OCI-LY7 (cell line): ENCODE measurements at regions of chr21 and their contacts with region 1.

Region 1: DNA sequence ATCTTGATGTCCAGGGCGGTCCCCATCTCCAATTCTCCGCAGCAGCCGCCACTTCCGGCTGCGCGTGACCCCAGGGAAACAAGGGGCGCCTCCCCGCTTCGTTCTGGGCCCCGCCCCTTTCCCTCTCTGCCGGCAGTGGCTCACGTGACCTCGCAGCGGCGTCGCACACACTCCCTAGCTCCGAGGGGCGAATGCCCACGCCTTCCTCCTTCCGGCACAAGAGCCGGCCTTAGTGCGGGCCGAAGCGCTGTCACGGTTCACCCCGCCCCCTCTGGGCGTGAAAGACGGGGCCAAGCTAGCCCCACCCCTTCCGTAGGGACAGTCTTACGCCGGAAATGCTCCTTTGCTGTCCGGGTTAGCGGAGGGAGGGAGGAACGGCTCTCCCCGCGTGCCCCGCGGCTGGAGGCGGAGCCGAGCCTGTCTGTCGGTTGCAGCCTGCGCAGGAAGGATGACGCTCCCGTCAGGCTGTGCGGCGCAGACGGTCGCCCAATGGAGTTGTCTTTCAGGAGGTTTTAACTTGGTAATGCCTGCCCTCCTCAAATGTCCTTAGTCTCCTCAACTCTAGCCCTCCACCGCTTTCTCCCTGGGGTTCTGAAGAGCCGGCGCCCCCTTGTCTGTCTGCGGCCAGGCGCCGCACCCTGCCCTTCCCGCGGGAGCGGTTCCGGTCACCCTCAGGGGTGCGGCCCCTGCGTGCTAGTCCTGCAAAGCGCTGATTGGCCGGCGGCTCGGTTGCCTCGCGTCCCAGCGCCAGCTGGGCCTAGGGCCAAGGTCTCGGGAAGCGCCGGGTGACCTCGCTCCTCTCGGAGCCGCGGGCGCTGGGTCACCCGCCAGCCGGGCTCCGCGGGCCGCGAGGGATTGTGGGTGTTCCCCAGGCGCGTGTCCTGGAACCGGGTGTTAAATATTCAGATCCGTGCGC is at the start of gene VPS26C:
- DNase-seq: peak; percentile 99
- H3K4me3 ChIP-seq: peak within 1 kb of the TSS; percentile 79
- H3K27ac ChIP-seq: peak within 1 kb of the TSS; percentile 90
- H3K4me1 ChIP-seq: peaks cover 26% of the 10 kb centered on the region
- CTCF ChIP-seq: no peak
- total RNA-seq, gene VPS26C: 33.0 and 39.7 TPM in 2 replicates

Region 2: DNA sequence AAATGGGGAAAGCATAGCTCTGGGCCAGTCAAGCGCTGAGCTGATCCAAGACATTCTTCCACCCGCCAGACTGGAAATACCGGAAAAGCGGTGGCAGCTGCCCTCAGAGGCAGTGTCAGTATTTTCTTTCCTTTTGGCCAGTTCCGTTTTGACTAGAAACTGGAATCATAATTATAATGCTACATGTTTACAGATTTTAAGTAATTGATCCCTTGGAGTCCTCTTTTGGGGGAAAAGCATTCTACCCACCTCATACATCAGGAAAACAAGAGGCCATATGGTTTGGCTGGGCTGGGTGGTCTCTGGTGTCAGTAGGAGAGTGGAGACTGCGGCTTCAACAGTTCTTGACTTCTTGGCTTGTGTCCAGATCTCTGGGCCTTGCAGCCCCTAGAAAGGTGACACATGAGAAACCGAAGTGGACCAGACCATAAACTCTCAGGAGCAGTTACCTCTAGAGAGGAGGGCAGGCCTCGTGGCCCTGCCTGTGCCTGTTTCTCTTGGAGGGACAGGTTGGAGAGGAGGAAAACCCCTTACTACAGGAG is 757.3 kb before region 1 on chr21:
- CTCF ChIA-PET with region 1: no interaction called
- POLR2A ChIA-PET with region 1: no interaction called
- intact Hi-C with region 1: loop called (anchors 10 kb)
- DNase-seq: no peak
- H3K4me3 ChIP-seq: no peak overlapping the region
- H3K27ac ChIP-seq: no peak overlapping the region
- H3K4me1 ChIP-seq: peaks cover 78% of the 10 kb centered on the region
- CTCF ChIP-seq: no peak

Region 3: DNA sequence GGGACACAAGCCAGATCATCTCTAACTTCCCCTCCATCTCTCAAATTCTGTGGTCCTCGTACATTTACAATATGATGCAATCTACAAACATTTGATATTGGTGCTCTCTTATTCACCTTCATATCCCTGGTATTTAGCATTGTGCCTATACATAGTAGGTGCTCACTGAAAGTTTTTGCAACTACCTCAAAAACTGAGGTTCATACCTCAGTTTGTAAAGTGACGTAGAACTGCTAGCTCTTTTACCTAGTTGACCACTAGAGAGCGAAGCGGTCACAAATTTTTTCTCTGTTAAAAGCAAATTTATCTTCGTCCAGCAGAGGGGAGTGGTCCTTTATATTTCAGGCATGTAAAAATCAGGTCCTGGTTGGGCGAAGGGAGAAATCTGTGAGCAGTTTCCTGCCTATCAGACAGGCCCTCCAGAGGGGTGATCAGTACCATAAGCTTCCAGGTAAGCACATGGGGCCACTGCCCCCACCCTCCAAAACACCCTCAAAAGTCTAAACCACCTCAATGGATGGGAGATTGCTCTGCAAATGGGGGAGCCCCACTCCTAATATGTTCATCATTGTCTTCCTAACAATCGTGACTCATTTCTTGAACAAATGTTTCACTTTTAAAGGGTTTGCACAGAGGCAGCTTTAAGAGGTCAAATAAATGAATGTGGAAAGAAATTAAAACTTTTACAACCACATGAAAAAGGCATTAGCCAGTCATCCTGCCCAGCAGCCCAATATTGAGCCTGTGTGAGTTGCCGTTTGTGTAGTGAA is 290.5 kb before region 1 on chr21:
- CTCF ChIA-PET with region 1: no interaction called
- POLR2A ChIA-PET with region 1: no interaction called
- intact Hi-C with region 1: loop called (anchors 5 kb)
- DNase-seq: peak; percentile 87
- H3K4me3 ChIP-seq: peak overlapping the region; percentile 10
- H3K27ac ChIP-seq: no peak overlapping the region
- H3K4me1 ChIP-seq: peaks cover 8% of the 10 kb centered on the region
- CTCF ChIP-seq: peak; percentile 97

Region 4: DNA sequence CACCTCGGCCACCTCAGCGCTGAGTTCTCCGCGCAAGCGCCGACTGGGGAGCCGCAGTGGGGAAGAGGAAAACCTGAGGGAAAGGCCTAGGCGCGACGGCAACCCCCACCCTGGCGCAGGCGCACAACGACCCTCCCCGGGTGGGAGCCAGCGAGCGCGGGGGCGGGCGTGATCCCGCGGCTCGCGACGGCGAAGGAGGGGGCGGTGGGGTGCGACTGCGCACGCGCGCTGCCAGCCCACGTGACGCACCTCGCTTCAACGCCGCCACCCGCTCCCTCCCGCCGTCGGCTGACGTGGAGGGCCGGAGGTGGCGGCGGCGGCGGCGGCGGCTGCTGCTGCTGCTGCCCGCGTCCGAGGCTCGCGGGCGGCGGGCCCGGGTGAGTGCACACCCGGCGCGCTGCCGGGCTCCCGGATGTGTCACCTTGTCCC is 194.5 kb before region 1 on chr21 and contains the starts of genes PIGP and TTC3:
- CTCF ChIA-PET with region 1: no interaction called
- POLR2A ChIA-PET with region 1: no interaction called
- intact Hi-C with region 1: loop called (anchors 2 kb)
- DNase-seq: peak; percentile 93
- H3K4me3 ChIP-seq: peak within 1 kb of the TSS; percentile 80
- H3K27ac ChIP-seq: peak within 1 kb of the TSS; percentile 55
- H3K4me1 ChIP-seq: peaks cover 32% of the 10 kb centered on the region
- CTCF ChIP-seq: no peak
- total RNA-seq, gene PIGP: 3.7 and 7.4 TPM in 2 replicates
- total RNA-seq, gene TTC3: 73.5 and 92.1 TPM in 2 replicates

Region 5: GRCh38 chr21:37220981-37221664 is 46.4 kb before region 1 on chr21:
- CTCF ChIA-PET with region 1: no interaction called
- POLR2A ChIA-PET with region 1: interaction called, 4 read pairs
- intact Hi-C with region 1: loop called (anchors 1 kb)
- DNase-seq: peak; percentile 97
- H3K4me3 ChIP-seq: peak overlapping the region; percentile 68
- H3K27ac ChIP-seq: peak overlapping the region; percentile 63
- H3K4me1 ChIP-seq: peaks cover 16% of the 10 kb centered on the region
- CTCF ChIP-seq: peak; percentile 77